ENCODE measurements at regions of chr5 and their contacts with region 1.

Region 1: DNA sequence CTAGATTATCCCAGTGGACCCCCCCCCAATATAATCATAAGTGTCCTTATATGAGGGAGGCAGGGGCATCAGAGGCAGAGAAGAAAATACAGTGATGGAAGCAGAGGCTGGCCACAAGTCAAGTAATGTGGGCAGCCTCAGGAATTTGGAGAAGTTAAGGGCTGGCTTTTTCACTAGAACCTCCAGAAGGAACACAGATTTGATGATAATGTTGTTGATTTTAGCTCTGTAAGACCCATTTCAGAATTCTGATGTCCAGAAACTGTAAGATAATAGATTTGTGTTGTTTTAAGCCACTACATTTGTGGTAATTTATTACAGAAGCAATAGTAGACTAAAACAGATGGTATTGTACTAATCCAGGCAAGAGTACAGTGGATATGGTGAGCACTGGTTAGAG is 36.3 kb upstream of the LRRTM2 start:
- DNase-seq: no peak
- ATAC-seq: no peak
- H3K4me3 ChIP-seq: no peak overlapping the region
- H3K27ac ChIP-seq: peak overlapping the region in 1 of 10 donors; percentile 55
- H3K4me1 ChIP-seq: peaks cover 0 to 35% (median 18%) of the 10 kb centered on the region in 9 donors
- H3K27me3 ChIP-seq: no peaks in the 10 kb centered on the region
- CTCF ChIP-seq: no peak

Region 2: DNA sequence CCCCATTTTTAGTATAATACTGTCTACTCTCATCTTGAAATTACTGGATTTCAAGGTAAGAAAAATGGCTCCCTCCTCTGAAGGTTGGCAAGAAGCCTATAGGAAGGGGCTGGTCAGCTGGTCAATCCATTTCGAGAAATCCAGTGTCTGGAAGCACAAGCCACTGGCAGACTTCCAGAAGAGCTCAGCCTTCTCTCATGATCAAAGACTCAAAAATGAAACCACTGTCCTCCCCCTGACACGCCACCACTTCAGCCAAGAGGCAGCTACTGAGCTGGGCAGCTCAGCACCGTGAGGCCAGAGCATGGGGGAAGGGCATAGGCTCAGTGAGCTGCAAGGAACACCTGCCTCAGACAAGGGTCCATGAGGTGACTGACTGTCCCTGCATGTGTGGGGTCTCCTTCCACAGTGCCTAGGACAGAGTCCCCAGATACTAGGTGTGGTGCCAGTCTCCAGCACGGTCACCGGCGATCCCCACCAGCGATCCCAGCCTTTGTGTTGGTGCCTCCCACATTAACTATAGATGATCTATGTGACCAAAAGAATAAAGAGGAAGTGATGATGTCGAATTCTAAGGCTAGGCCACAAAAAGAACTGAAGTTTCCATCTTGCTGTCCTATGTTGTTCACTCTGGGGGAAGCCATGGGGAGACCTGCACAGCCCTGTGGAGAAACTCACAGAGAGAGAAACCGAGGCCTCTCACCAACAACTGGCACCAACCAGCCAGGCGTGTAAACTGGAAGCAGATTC is 63.8 kb after region 1 on chr5:
- intact Hi-C with region 1: loop called in 1 of 10 experiments (anchors 5 kb)
- DNase-seq: peak; percentile 26 to 73
- ATAC-seq: peak; percentile 28 to 72 (median 42)
- H3K4me3 ChIP-seq: no peak overlapping the region
- H3K27ac ChIP-seq: peak overlapping the region; percentile 77 to 93 (median 82)
- H3K4me1 ChIP-seq: peaks cover 15 to 54% (median 44%) of the 10 kb centered on the region in 9 donors
- H3K27me3 ChIP-seq: no peaks in the 10 kb centered on the region
- CTCF ChIP-seq: no peak

Region 3: GRCh38 chr5:139551191-139551889 is 639.9 kb after region 1 on chr5:
- intact Hi-C with region 1: loop called in 1 of 10 experiments (anchors 10 kb)
- DNase-seq: no peak
- ATAC-seq: no peak
- H3K4me3 ChIP-seq: no peak overlapping the region
- H3K27ac ChIP-seq: no peak overlapping the region
- H3K4me1 ChIP-seq: no peaks in the 10 kb centered on the region
- H3K27me3 ChIP-seq: no peaks in the 10 kb centered on the region
- CTCF ChIP-seq: no peak